ENCODE measurements at regions of chr1 and their contacts with region 1.

Region 1: DNA sequence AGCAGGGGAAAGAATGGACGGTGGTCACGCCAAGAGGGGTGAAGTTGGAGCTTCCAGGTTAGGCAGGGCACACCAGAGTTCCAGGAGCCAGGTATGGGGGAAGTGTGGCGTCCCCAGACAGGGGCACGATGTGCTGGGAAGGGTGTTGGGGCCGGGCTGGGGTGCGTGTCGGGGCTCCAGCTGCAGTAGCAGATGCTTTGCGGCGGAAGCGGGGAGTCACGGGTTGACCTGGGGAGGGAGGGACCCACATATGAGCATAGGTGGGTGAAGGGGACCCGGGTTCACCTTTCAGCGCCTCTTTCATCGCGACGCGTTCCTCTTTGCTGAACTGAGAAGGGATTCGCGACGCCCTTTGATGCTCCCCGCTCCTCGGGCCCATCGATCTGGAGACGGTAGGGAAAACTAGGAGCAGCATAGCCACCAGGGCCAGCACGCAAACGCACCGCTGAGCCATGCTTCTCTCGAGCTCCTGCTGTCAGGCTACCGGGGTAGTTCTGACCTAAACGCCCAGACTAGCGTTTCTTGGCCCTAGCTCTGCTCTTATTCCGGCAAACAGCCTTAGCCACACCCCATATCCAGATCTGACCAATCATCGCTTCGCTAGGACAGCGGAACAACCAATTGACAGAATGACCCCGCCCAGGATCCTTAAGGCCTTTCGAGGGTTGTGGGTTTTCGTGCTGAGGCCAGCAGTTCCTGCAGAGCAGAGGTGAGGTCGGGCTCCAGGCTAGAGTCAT is at the start of gene PM20D1:
- DNase-seq: peak; percentile 97
- H3K4me3 Mint-ChIP-seq: peak within 1 kb of the TSS; percentile 93
- H3K27ac Mint-ChIP-seq: peak within 1 kb of the TSS; percentile 87
- H3K4me1 Mint-ChIP-seq: peaks cover 21% of the 10 kb centered on the region
- H3K27me3 Mint-ChIP-seq: peaks cover 6% of the 10 kb centered on the region
- total RNA-seq, gene PM20D1: 0.16 and 0.71 TPM in 2 replicates

Region 2: GRCh38 chr1:205812878-205813754 is 36.7 kb before region 1 on chr1 and contains the start of gene SLC41A1:
- intact Hi-C with region 1: loop called (anchors 1 kb)
- DNase-seq: peak; percentile 95
- H3K4me3 Mint-ChIP-seq: peak within 1 kb of the TSS; percentile 95
- H3K27ac Mint-ChIP-seq: peak within 1 kb of the TSS; percentile 86
- H3K4me1 Mint-ChIP-seq: peaks cover 37% of the 10 kb centered on the region
- H3K27me3 Mint-ChIP-seq: peaks cover 9% of the 10 kb centered on the region
- total RNA-seq, gene SLC41A1: 29.5 and 30.1 TPM in 2 replicates

Measured in activated CD4-positive, alpha-beta T cell treated with anti-CD3 and anti-CD28 coated beads, Interleukin-2, amount 10 ng/mL, durations not matched to agents 24 days and 14 days (primary cell).